B cell (primary cell): ENCODE measurements at regions of chr3 and their contacts with region 1.

Region 1: GRCh38 chr3:101573449-101574387 is at the start of gene PCNP:
- DNase-seq: peak; percentile 100
- ATAC-seq: peak; percentile 78
- H3K4me3 ChIP-seq: peak within 1 kb of the TSS; percentile 88 to 97 (median 91)
- H3K4me3 Mint-ChIP-seq: peak within 1 kb of the TSS; percentile 99
- H3K27ac ChIP-seq: peak within 1 kb of the TSS; percentile 98 to 99
- H3K27ac Mint-ChIP-seq: peak within 1 kb of the TSS; percentile 98
- H3K4me1 ChIP-seq: peaks cover 32 to 39% of the 10 kb centered on the region in 2 donors
- H3K4me1 Mint-ChIP-seq: peaks cover 46% of the 10 kb centered on the region
- H3K27me3 ChIP-seq: no peaks in the 10 kb centered on the region
- H3K27me3 Mint-ChIP-seq: no peaks in the 10 kb centered on the region
- CTCF ChIP-seq: peak; percentile 88
- total RNA-seq, gene PCNP: 156 and 157 TPM in 2 replicates

Region 2: DNA sequence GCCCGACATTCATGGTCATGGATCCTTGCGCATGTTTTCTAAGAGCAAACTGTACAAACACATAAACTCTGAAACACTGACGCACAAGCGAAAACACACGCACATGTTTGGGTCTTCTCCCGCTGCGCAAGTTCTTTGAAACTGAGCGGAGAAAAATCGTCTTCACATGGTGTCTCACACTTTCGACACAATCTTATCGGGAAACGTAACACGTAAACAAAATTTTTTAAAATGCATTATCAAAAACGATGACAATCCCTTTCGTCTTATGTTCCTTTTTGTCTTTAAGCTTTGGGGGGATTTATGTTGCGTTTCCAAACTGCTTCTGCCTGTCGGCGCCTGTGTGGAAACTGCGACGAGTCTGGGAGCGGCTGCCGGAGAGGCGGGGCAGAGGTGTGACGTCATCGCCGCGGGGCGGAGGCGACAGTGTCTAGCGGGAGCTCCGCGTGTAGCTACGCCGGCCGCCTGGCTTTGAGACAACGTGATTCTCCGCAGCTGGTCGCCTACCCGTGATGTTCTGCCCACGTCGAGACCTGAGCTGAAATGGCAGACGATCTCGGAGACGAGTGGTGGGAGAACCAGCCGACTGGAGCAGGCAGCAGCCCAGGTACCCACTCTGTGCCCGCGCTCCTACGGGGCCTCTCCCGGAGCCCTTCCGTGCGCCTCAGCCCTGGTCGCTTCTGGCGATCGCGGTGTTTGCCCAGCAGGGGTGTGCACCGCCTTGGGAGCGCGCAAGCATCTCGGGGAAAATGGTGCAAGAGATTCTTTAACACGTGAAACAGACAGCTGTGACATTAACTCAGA is 1756.1 kb before region 1 on chr3 and contains the start of gene CMSS1:
- CTCF ChIA-PET with region 1: no interaction called
- POLR2A ChIA-PET with region 1: no interaction called
- intact Hi-C with region 1: loop called (anchors 5 kb)
- DNase-seq: peak; percentile 98
- ATAC-seq: peak; percentile 91
- H3K4me3 ChIP-seq: peak within 1 kb of the TSS; percentile 71 to 99 (median 89)
- H3K4me3 Mint-ChIP-seq: peak within 1 kb of the TSS; percentile 99
- H3K27ac ChIP-seq: peak within 1 kb of the TSS; percentile 85 to 91
- H3K27ac Mint-ChIP-seq: peak within 1 kb of the TSS; percentile 100
- H3K4me1 ChIP-seq: peaks cover 16 to 17% of the 10 kb centered on the region in 2 donors
- H3K4me1 Mint-ChIP-seq: peaks cover 39% of the 10 kb centered on the region
- H3K27me3 ChIP-seq: no peaks in the 10 kb centered on the region
- H3K27me3 Mint-ChIP-seq: no peaks in the 10 kb centered on the region
- CTCF ChIP-seq: no peak
- total RNA-seq, gene CMSS1: 22.0 and 22.8 TPM in 2 replicates

Region 3: DNA sequence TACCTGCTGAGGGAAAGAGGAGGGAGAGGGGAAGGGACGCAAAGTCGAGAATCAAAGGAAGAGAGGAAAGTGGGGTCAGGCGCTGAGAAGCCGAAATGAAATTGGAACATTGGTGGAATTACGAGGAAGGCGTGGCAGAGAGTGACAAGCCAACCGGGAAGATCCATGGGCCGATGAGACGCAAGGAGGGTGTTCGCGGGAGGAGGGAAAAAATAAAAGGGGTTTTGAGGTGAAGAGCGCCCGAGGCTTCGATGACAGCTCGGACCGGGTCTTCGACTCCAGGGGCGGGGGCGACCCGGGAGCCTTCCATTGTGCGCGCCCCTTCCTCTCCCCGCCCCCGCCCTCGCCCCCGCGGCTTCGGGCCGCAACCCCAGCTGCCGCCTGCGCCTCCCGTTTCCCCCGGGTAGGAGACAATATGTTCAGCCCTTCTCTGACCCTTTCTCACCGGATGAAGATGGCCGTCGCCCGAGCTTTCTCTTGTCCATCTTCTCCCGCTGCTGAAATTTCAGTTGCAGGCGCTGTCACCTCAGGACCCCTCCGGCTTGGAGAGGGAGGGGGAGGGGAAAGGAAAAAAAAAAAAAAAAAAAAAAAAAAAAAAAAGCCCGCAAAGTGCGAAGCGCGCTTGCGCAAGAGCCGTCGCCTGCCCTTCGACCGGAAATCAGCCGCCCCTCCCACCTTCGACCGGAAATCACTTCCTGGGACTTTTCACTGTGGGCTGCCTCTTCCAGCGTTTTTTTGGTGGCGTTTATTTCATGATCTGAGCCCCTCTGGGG is 60.9 kb before region 1 on chr3 and contains the start of gene SENP7:
- CTCF ChIA-PET with region 1: interaction called, 9 read pairs
- POLR2A ChIA-PET with region 1: interaction called, 24 read pairs
- intact Hi-C with region 1: loop called (anchors 1 kb)
- DNase-seq: peak; percentile 89
- ATAC-seq: peak; percentile 72
- H3K4me3 ChIP-seq: peak within 1 kb of the TSS; percentile 67 to 97 (median 86)
- H3K4me3 Mint-ChIP-seq: peak within 1 kb of the TSS; percentile 100
- H3K27ac ChIP-seq: peak within 1 kb of the TSS; percentile 91 to 95
- H3K27ac Mint-ChIP-seq: peak within 1 kb of the TSS; percentile 99
- H3K4me1 ChIP-seq: peaks cover 11 to 12% of the 10 kb centered on the region in 2 donors
- H3K4me1 Mint-ChIP-seq: peaks cover 46% of the 10 kb centered on the region
- H3K27me3 ChIP-seq: peaks cover 0 to 5% (median 0%) of the 10 kb centered on the region in 4 experiments
- H3K27me3 Mint-ChIP-seq: peaks cover 11% of the 10 kb centered on the region
- CTCF ChIP-seq: no peak
- total RNA-seq, gene SENP7: 47.5 and 50.3 TPM in 2 replicates

Region 4: DNA sequence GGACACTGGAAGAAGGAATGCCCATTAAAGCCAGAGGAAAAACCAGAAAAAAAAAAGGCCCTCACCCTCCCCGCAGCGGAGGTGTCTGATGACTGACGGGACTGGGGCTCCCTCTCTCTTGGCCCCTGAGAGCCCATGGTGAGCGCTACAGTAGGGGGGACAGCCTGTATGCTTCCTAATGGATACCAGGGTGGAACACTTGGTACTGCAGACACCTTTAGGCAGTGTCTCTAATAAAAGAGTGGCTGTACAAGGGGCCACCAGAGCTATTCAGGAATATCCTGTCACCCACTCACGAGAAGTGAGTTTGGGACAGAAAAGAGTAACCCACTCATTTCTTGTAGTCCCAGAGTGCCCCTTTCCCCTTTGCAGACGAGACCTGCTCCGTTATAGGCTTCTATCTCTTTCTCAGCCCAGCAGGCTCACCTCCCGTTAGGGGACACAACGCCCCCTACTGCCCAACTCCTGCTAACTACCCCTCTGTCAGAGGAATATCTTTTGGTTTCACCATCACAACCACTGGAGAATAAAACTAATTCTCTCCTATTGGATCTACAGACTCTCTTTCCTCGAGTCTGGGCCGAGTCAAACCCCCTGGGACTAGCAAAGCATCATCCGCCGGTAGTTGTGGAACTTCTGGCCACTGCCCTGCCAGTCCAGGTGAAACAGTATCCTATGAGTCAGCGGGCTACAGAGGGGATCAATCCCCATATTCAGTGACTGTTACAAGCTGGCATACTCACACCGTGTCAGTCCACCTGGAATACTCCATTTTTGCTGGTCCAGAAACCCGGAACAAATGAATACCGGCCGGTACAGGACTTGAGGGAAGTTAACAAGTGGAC is 62.5 kb after region 1 on chr3:
- CTCF ChIA-PET with region 1: no interaction called
- POLR2A ChIA-PET with region 1: no interaction called
- intact Hi-C with region 1: loop called (anchors 1 kb)
- DNase-seq: peak; percentile 61
- ATAC-seq: peak; percentile 71
- H3K4me3 ChIP-seq: no peak overlapping the region
- H3K4me3 Mint-ChIP-seq: no peak overlapping the region
- H3K27ac ChIP-seq: no peak overlapping the region
- H3K27ac Mint-ChIP-seq: no peak overlapping the region
- H3K4me1 ChIP-seq: peaks cover 4 to 7% of the 10 kb centered on the region in 2 donors
- H3K4me1 Mint-ChIP-seq: peaks cover 3% of the 10 kb centered on the region
- H3K27me3 ChIP-seq: no peaks in the 10 kb centered on the region
- H3K27me3 Mint-ChIP-seq: no peaks in the 10 kb centered on the region
- CTCF ChIP-seq: peak; percentile 76

Region 5: GRCh38 chr3:101724329-101725193 is 150.8 kb after region 1 on chr3 and contains the start of gene CEP97:
- CTCF ChIA-PET with region 1: interaction called, 5 read pairs
- POLR2A ChIA-PET with region 1: interaction called, 11 read pairs
- intact Hi-C with region 1: loop called (anchors 2 kb)
- DNase-seq: peak; percentile 91
- ATAC-seq: peak; percentile 93
- H3K4me3 ChIP-seq: peak within 1 kb of the TSS; percentile 77 to 99 (median 84)
- H3K4me3 Mint-ChIP-seq: peak within 1 kb of the TSS; percentile 100
- H3K27ac ChIP-seq: peak within 1 kb of the TSS; percentile 70 to 74
- H3K27ac Mint-ChIP-seq: peak within 1 kb of the TSS; percentile 99
- H3K4me1 ChIP-seq: peaks cover 30 to 34% of the 10 kb centered on the region in 2 donors
- H3K4me1 Mint-ChIP-seq: peaks cover 37% of the 10 kb centered on the region
- H3K27me3 ChIP-seq: no peaks in the 10 kb centered on the region
- H3K27me3 Mint-ChIP-seq: no peaks in the 10 kb centered on the region
- CTCF ChIP-seq: no peak
- total RNA-seq, gene CEP97: 15.0 and 15.4 TPM in 2 replicates